ENCODE measurements at regions of chr12 and their contacts with region 1.

Region 1: DNA sequence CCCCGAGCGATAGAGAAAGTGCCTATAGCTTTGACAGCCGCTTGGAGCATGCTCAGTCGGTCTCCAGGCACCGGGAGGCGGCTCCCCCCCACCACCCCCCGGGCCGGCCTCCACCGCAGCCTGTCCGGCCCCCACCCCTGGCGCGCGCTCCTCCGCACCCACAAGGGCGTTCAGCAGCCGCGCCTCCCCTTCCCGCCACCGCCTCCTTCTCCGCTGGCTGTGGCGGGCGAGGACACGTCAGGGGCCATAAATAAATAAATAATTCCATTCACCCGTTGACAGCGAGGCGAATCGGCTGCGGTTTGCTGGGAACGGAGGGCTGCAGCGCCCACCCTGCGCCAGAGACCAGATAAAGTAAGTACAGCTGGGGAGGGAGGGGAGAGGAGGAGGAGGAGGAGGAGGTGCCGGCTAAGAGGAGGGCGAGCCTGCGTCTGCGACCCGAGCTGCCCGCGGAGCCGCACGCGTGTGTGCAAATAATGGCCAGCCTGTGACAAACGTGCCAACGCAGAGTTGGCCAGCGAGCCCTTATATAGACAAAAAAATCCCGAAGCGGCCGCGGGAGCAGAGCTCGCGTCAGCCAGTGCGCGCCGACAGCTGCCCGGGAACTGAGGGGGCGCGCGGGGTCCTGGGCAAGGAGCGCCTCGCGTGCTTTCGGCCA is at the start of gene SLC16A7:
- DNase-seq: peak; percentile 66 to 71
- ATAC-seq: peak; percentile 26 to 49
- H3K4me3 ChIP-seq: peak within 1 kb of the TSS; percentile 72 to 83 (median 75)
- H3K27ac ChIP-seq: peak within 1 kb of the TSS; percentile 83 to 94 (median 90)
- H3K4me1 ChIP-seq: peaks cover 8 to 12% of the 10 kb centered on the region in 2 donors
- H3K27me3 ChIP-seq: no peaks in the 10 kb centered on the region
- CTCF ChIP-seq: no peak
- POLR2A ChIP-seq: peak; percentile 28 to 56
- total RNA-seq, gene SLC16A7: 3.8 to 10.3 (median 6.7) TPM

Region 2: DNA sequence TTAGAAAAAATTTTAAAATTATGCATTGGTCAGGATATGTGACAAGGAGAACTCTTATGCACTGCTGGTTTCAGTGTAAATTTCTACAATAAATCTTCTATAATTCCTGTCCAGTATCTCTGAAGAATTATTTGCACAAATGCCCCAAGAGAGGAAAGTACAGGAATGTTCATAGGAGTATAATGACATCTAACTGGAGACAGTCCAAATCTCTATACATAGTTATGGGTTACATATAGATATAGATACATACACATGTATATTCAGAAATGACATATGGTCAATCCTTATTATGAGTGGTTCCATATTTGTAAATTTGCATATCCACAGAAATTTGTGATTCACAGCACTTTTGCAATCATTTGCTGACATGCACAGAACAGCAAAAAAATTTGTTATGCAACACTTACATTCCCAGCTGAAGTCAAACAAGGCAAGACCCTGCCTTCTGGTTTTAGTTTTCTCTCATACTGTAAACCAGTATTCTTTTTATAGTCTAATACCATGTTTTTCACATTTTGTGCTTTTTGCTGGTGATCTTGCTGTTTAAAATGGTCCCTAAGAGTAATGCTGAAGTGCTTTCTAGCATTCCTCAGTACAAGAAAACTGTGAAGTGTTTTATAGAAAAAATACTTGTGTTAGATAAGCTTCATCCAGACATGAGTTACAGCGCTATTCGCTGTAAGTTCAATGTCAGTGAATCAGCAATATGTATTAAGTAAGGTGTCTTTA is 103.6 kb after region 1 on chr12:
- in situ Hi-C with region 1: no loop called
- intact Hi-C with region 1: loop called (anchors 2 kb)
- DNase-seq: no peak
- ATAC-seq: no peak
- H3K4me3 ChIP-seq: no peak overlapping the region
- H3K27ac ChIP-seq: no peak overlapping the region
- H3K4me1 ChIP-seq: no peaks in the 10 kb centered on the region
- H3K27me3 ChIP-seq: no peaks in the 10 kb centered on the region
- CTCF ChIP-seq: no peak
- POLR2A ChIP-seq: no peak

Region 3: GRCh38 chr12:59944177-59944576 is 348.2 kb after region 1 on chr12:
- in situ Hi-C with region 1: no loop called
- intact Hi-C with region 1: no loop called
- DNase-seq: no peak
- ATAC-seq: no peak
- H3K4me3 ChIP-seq: no peak overlapping the region
- H3K27ac ChIP-seq: no peak overlapping the region
- H3K4me1 ChIP-seq: no peaks in the 10 kb centered on the region
- H3K27me3 ChIP-seq: no peaks in the 10 kb centered on the region
- CTCF ChIP-seq: no peak
- POLR2A ChIP-seq: no peak